ENCODE measurements at regions of chr3 and their contacts with region 1.

Region 1: DNA sequence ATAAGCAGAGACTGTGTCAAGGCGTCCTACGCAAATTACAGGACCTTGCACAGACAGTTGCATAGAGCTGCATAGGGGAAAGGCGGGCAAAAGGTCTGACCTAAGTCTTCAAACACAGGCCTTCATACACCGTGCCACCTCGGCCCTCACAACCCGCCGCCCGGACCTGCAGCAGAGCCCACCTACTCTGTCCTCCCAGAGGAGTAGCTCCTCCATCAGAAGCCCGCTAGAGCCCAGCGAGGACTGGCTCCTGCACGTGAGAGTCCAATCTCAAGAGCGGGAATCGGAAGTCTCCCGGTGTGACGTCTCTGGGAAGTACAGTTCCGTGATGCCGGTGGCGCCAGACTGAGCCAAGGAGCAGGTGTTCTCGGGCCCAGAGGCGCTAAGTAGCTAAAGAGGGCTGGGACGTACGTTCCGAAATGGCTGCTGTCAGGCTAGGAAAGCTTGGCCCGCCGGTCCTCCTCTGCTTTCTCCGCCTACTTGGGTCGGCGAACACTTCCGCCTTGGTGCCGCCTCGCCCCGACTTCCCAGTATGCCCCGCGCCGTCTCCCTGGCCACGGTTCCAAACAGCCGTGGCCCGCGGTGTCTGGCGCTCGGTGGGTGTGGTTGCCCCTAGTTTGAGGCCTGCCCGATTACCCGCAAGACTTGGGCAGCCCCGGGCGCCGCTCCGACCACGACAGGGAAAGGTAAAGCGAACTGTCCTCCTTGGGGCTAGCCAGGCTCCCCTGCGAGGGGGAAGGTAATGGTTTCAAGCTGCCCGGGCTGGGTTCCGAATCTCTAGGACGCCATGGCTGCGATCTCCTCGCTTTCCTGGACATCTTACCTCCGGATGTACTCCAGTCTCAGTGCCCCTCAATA is at the starts of genes ASTE1 and NEK11:
- DNase-seq: peak; percentile 93 to 95 (median 94)
- H3K4me3 ChIP-seq: peak within 1 kb of the TSS; percentile 76 to 95
- H3K4me3 Mint-ChIP-seq: peak within 1 kb of the TSS; percentile 87 to 95 (median 94)
- H3K27ac ChIP-seq: peak within 1 kb of the TSS; percentile 90
- H3K27ac Mint-ChIP-seq: peak within 1 kb of the TSS; percentile 92 to 99 (median 98)
- H3K4me1 ChIP-seq: peaks cover 51% of the 10 kb centered on the region
- H3K4me1 Mint-ChIP-seq: peaks cover 39 to 60% (median 49%) of the 10 kb centered on the region in 4 donors
- H3K27me3 ChIP-seq: no peaks in the 10 kb centered on the region
- H3K27me3 Mint-ChIP-seq: no peaks in the 10 kb centered on the region
- total RNA-seq, gene ASTE1: 28.1 TPM
- total RNA-seq, gene NEK11: 5.3 to 6.2 TPM

Region 2: GRCh38 chr3:130111185-130111864 is 915.2 kb before region 1 on chr3:
- CTCF ChIA-PET with region 1: no interaction called
- POLR2A ChIA-PET with region 1: no interaction called
- intact Hi-C with region 1: loop called (anchors 1 kb)
- DNase-seq: peak; percentile 97 to 99 (median 99)
- H3K4me3 ChIP-seq: peak overlapping the region in 1 of 2 donors; percentile 73
- H3K4me3 Mint-ChIP-seq: peak overlapping the region; percentile 96 to 100 (median 98)
- H3K27ac ChIP-seq: peak overlapping the region; percentile 82
- H3K27ac Mint-ChIP-seq: peak overlapping the region; percentile 94 to 100 (median 100)
- H3K4me1 ChIP-seq: peaks cover 8% of the 10 kb centered on the region
- H3K4me1 Mint-ChIP-seq: peaks cover 10 to 27% (median 12%) of the 10 kb centered on the region in 4 donors
- H3K27me3 ChIP-seq: no peaks in the 10 kb centered on the region
- H3K27me3 Mint-ChIP-seq: no peaks in the 10 kb centered on the region

Region 3: DNA sequence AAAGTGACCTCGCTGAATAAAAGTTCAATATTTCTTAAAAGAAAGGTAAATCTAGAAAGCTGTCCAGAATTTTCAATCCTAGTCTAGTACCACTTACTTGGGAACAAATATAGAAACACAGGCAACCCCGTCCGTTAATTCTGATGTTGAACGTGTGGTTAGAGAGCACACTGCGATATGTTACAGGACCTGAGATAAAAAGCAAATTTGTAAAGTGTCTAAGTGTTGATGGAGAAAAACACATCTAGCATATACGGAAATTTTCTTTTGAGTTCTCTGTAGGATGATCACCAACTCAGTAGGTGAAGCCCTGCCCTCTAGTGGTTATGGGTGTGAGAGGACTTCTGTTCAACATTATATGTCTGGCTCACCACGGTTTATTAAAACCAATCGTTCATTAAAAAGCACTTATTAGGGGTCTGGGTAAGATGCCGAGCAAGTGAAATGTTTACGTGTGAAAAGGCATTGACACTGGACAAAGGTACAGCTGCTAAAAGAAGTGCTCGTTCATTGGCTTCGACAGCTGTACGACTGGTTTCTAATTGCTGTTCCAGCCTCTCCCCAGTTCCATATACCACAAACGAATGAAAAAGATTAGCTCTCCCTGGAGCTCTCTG is 133.7 kb before region 1 on chr3:
- CTCF ChIA-PET with region 1: interaction called, 6 read pairs
- POLR2A ChIA-PET with region 1: interaction called, 40 read pairs
- intact Hi-C with region 1: loop called (anchors 1 kb)
- DNase-seq: peak; percentile 75 to 80 (median 76)
- H3K4me3 ChIP-seq: peak overlapping the region; percentile 79 to 99
- H3K4me3 Mint-ChIP-seq: peak overlapping the region; percentile 95 to 99 (median 98)
- H3K27ac ChIP-seq: peak overlapping the region; percentile 99
- H3K27ac Mint-ChIP-seq: peak overlapping the region; percentile 99 to 100 (median 100)
- H3K4me1 ChIP-seq: peaks cover 29% of the 10 kb centered on the region
- H3K4me1 Mint-ChIP-seq: peaks cover 27 to 47% (median 32%) of the 10 kb centered on the region in 4 donors
- H3K27me3 ChIP-seq: no peaks in the 10 kb centered on the region
- H3K27me3 Mint-ChIP-seq: peaks cover 0 to 1% of the 10 kb centered on the region in 2 donors

Region 4: DNA sequence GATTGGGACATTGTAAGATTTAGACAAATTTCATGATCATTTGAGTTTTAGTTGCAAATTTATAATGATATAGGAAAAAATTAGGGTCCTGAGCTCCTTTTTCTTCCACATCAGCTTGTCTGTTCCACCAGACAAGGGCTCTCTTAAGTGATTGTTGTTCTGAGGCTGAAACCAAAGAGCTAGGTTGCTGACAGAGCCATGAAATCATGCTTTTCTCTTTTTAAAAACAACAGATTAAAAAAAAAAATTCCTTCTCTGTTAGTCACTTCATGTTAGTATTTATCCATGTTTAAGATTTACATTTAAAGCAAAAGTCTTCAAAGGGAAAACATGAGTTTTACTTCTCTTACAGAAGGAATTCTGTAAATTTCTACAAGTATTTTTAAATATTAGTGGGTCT is 75.9 kb before region 1 on chr3:
- CTCF ChIA-PET with region 1: no interaction called
- POLR2A ChIA-PET with region 1: no interaction called
- intact Hi-C with region 1: no loop called
- DNase-seq: no peak
- H3K4me3 ChIP-seq: no peak overlapping the region
- H3K4me3 Mint-ChIP-seq: no peak overlapping the region
- H3K27ac ChIP-seq: no peak overlapping the region
- H3K27ac Mint-ChIP-seq: no peak overlapping the region
- H3K4me1 ChIP-seq: no peaks in the 10 kb centered on the region
- H3K4me1 Mint-ChIP-seq: peaks cover 0 to 7% (median 4%) of the 10 kb centered on the region in 4 donors
- H3K27me3 ChIP-seq: no peaks in the 10 kb centered on the region
- H3K27me3 Mint-ChIP-seq: no peaks in the 10 kb centered on the region

Region 5: GRCh38 chr3:130981469-130981868 is 45.1 kb before region 1 on chr3:
- CTCF ChIA-PET with region 1: no interaction called
- POLR2A ChIA-PET with region 1: no interaction called
- intact Hi-C with region 1: no loop called
- DNase-seq: no peak
- H3K4me3 ChIP-seq: no peak overlapping the region
- H3K4me3 Mint-ChIP-seq: no peak overlapping the region
- H3K27ac ChIP-seq: no peak overlapping the region
- H3K27ac Mint-ChIP-seq: no peak overlapping the region
- H3K4me1 ChIP-seq: no peaks in the 10 kb centered on the region
- H3K4me1 Mint-ChIP-seq: peaks cover 0 to 1% (median under 1%) of the 10 kb centered on the region in 4 donors
- H3K27me3 ChIP-seq: no peaks in the 10 kb centered on the region
- H3K27me3 Mint-ChIP-seq: no peaks in the 10 kb centered on the region

Region 6: GRCh38 chr3:131381444-131382291 is 355.1 kb after region 1 on chr3 and contains the start of gene NUDT16:
- CTCF ChIA-PET with region 1: interaction called, 5 read pairs
- POLR2A ChIA-PET with region 1: interaction called, 31 read pairs
- intact Hi-C with region 1: loop called (anchors 1 kb)
- DNase-seq: peak; percentile 92 to 96 (median 94)
- H3K4me3 ChIP-seq: peak within 1 kb of the TSS; percentile 89 to 95
- H3K4me3 Mint-ChIP-seq: peak within 1 kb of the TSS; percentile 96 to 98 (median 96)
- H3K27ac ChIP-seq: peak within 1 kb of the TSS; percentile 61
- H3K27ac Mint-ChIP-seq: peak within 1 kb of the TSS; percentile 90 to 99 (median 96)
- H3K4me1 ChIP-seq: peaks cover 28% of the 10 kb centered on the region
- H3K4me1 Mint-ChIP-seq: peaks cover 33 to 43% (median 38%) of the 10 kb centered on the region in 4 donors
- H3K27me3 ChIP-seq: no peaks in the 10 kb centered on the region
- H3K27me3 Mint-ChIP-seq: no peaks in the 10 kb centered on the region
- total RNA-seq, gene NUDT16: 15.6 to 16.7 TPM

Region 7: DNA sequence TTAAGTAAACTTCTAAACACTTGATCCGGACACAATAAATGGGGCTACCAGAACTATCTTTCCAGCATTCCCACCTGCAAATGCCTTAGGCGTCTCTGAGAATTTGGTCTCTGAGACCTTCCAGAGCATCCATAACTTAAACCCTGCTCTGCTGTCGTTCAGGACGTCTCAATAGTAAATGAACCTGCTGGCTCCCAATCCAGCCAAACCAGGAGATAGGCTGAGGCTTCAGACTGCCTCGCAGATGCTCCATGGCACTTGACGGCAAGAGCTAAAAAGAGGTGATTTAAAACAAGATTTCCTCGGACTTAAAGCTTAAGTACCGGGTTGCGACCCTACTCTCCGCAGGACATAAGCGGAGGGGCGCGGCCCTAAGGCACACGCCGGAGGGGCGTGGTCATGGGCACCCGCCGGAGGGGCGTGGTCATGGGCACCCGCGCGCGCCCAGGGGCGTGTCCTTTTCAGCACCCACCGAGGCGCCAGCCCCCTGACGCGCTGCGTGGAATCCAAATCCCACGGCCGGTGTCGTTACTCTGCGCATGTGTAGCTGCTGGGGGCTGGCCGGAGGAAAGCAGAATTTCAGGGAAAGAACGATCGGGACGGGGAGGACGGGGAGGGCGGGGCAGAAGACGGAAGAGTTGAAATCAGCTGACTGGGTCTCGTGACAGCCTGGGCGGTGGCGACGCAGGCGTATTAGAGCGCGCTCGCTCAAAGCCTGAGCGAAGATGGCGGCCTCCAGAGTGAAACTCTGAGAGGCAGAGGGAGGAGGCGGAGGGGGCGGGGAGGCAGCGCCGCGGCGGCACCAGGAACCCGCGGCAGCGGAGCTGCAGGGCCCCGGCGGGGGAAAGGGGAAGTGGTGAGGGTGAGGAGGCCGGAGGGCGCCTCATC is 1390.5 kb after region 1 on chr3 and contains the start of gene DNAJC13:
- CTCF ChIA-PET with region 1: no interaction called
- POLR2A ChIA-PET with region 1: interaction called, 10 read pairs
- intact Hi-C with region 1: loop called (anchors 2 kb)
- DNase-seq: peak; percentile 91 to 95 (median 93)
- H3K4me3 ChIP-seq: peak within 1 kb of the TSS; percentile 84 to 89
- H3K4me3 Mint-ChIP-seq: peak within 1 kb of the TSS; percentile 96 to 100 (median 99)
- H3K27ac ChIP-seq: peak within 1 kb of the TSS; percentile 82
- H3K27ac Mint-ChIP-seq: peak within 1 kb of the TSS; percentile 95 to 99 (median 98)
- H3K4me1 ChIP-seq: peaks cover 23% of the 10 kb centered on the region
- H3K4me1 Mint-ChIP-seq: peaks cover 20 to 38% (median 26%) of the 10 kb centered on the region in 4 donors
- H3K27me3 ChIP-seq: no peaks in the 10 kb centered on the region
- H3K27me3 Mint-ChIP-seq: no peaks in the 10 kb centered on the region
- total RNA-seq, gene DNAJC13: 43.1 to 43.5 TPM

Measured in CD4-positive, alpha-beta memory T cell (primary cell).